Endothelial cell of umbilical vein (primary cell): ENCODE measurements at regions of chr1 and their contacts with region 1.

Region 1: GRCh38 chr1:116570358-116571200 is at the start of gene CD58:
- DNase-seq: peak; percentile 83
- H3K4me3 ChIP-seq: peak within 1 kb of the TSS; percentile 64 to 93 (median 69)
- H3K27ac ChIP-seq: peak within 1 kb of the TSS; percentile 70
- H3K4me1 ChIP-seq: peaks cover 9% of the 10 kb centered on the region
- H3K27me3 ChIP-seq: peaks cover 6% of the 10 kb centered on the region in 2 experiments
- CTCF ChIP-seq: peak; percentile 75
- POLR2A ChIP-seq: peak; percentile 81
- total RNA-seq, gene CD58: 9.8 and 12.3 TPM in 2 replicates

Region 2: DNA sequence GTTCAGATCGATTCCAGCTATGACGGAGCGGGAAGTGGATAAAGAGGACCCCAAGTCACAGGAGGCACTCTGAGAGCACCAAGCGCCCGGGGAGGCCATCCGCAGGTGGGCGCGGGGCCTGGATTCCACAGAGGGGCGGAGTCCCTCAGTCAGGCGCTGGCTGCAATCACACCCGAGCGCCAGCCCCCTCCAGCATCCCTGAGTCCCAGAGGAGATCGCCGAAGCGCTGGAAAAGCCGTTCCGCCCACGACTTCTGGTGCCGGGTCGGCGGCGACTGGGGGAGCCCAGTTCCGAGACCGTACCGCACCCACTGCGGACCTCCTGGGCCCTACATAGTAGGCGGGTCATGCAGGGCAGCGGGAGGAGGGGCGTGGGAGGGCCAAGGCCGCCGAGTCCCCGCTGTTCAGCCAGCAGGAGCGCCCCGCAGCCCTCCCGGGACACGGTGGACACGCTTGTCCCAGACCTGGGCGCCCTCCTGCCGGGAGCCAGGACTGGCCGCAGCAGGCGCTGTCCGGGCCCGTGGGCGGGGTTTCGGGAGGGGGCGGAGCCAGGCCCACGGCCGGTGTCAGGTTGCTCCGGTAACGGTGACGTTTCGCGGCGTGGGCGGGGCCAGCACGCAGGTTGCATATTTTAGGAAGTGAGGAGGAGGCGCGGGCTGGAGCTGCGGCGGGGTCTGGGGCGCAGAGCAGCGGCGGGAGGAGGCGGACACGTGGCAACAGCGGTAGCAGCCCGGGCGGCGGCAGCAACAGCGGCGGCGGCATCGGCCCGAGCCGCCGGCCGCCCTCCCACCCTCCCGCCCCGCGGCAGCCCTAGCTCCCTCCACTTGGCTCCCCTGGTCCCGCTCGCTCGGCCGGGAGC is 197.8 kb before region 1 on chr1 and contains the start of gene ATP1A1:
- CTCF ChIA-PET with region 1: no interaction called
- POLR2A ChIA-PET with region 1: no interaction called
- dilution Hi-C with region 1: no loop called
- intact Hi-C with region 1: loop called (anchors 5 kb)
- DNase-seq: peak; percentile 96
- H3K4me3 ChIP-seq: peak within 1 kb of the TSS; percentile 91 to 96 (median 94)
- H3K27ac ChIP-seq: peak within 1 kb of the TSS; percentile 96
- H3K4me1 ChIP-seq: peaks cover 37% of the 10 kb centered on the region
- H3K27me3 ChIP-seq: peaks cover 10 to 26% of the 10 kb centered on the region in 2 experiments
- CTCF ChIP-seq: peak in 1 of 2 donors; percentile 12
- POLR2A ChIP-seq: peak; percentile 93
- total RNA-seq, gene ATP1A1: 263 and 325 TPM in 2 replicates

Region 3: GRCh38 chr1:116556289-116557006 is 14.1 kb before region 1 on chr1:
- CTCF ChIA-PET with region 1: interaction called, 10 read pairs
- POLR2A ChIA-PET with region 1: no interaction called
- dilution Hi-C with region 1: no loop called
- intact Hi-C with region 1: no loop called
- DNase-seq: no peak
- H3K4me3 ChIP-seq: no peak overlapping the region
- H3K27ac ChIP-seq: no peak overlapping the region
- H3K4me1 ChIP-seq: peaks cover 2% of the 10 kb centered on the region
- H3K27me3 ChIP-seq: no peaks in the 10 kb centered on the region
- CTCF ChIP-seq: no peak
- POLR2A ChIP-seq: no peak

Region 4: DNA sequence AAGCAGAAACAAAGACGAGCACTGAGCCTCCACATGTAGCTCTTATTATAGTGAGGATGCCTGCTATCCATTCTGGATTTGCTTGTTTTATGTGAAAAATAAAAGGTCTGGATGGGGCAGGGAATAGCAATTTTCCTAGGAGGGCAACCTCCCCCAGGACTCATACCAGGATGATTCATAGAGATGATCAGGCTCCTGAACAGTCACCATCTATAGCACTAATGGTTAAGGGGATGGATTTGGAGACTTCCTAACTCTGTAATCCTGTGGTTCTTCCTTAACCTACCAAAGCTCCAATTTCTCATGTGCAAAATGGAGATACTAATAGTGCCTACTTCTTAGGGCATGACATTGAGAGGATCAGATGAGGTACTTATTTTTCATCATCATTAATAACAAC is 34.7 kb after region 1 on chr1:
- CTCF ChIA-PET with region 1: no interaction called
- POLR2A ChIA-PET with region 1: no interaction called
- dilution Hi-C with region 1: no loop called
- intact Hi-C with region 1: no loop called
- DNase-seq: no peak
- H3K4me3 ChIP-seq: no peak overlapping the region
- H3K27ac ChIP-seq: no peak overlapping the region
- H3K4me1 ChIP-seq: no peaks in the 10 kb centered on the region
- H3K27me3 ChIP-seq: no peaks in the 10 kb centered on the region
- CTCF ChIP-seq: no peak
- POLR2A ChIP-seq: no peak

Region 5: GRCh38 chr1:116737020-116737854 is 166.7 kb after region 1 on chr1:
- CTCF ChIA-PET with region 1: interaction called, 6 read pairs
- POLR2A ChIA-PET with region 1: no interaction called
- dilution Hi-C with region 1: no loop called
- intact Hi-C with region 1: loop called (anchors 5 kb)
- DNase-seq: peak; percentile 60
- H3K4me3 ChIP-seq: no peak overlapping the region
- H3K27ac ChIP-seq: no peak overlapping the region
- H3K4me1 ChIP-seq: no peaks in the 10 kb centered on the region
- H3K27me3 ChIP-seq: peaks cover 0 to 2% of the 10 kb centered on the region in 2 experiments
- CTCF ChIP-seq: peak; percentile 77 to 80
- POLR2A ChIP-seq: no peak

Region 6: GRCh38 chr1:116763787-116764465 is 193.3 kb after region 1 on chr1:
- CTCF ChIA-PET with region 1: no interaction called
- POLR2A ChIA-PET with region 1: no interaction called
- dilution Hi-C with region 1: no loop called
- intact Hi-C with region 1: no loop called
- DNase-seq: peak; percentile 5
- H3K4me3 ChIP-seq: no peak overlapping the region
- H3K27ac ChIP-seq: no peak overlapping the region
- H3K4me1 ChIP-seq: no peaks in the 10 kb centered on the region
- H3K27me3 ChIP-seq: no peaks in the 10 kb centered on the region
- CTCF ChIP-seq: peak; percentile 30 to 50
- POLR2A ChIP-seq: no peak

Region 7: DNA sequence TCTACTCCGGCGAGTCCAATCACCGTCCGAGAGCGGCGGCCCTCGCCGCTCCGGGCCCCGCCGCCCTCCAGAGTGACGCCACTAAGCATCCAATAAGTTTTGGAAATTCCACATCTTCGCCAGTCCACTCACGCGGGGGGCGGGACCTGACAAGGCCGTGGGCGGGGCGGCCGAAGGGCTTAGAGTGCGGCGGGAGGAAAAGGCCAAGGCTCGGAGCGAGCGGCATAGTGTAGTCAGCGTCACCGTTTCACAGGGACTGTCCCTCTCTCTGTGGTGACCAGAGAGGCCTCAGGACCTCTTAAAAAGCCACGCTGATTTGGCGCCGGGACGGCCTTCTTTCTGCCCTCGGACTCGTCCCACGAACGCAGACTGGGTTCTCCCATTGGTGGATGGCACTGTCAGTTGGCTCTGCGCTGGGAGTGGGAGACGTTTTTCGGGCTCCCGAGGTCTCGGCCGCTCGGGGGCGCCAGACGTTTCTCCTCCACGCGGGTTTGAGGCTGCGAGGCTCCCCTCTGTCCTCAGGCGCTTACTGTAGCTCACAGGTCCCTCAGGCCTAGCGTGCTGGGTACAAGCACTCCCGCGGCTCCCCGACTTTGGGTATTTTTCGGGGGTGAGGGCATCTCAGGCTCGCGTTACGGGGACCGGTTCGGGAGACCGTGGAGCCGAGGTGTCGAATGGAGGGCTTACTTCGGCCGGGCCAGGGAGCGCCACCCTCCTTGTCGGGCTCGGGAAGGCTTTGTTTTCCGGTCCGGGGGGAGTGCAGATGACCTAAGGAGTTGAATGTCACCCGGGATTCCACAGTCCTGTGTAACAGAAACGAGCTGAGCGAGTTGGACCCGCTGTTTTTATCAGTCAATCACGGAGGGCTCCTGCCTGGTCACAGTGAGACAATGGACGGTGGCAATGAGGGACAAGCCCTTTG is 551.5 kb after region 1 on chr1:
- CTCF ChIA-PET with region 1: no interaction called
- POLR2A ChIA-PET with region 1: no interaction called
- dilution Hi-C with region 1: no loop called
- intact Hi-C with region 1: loop called (anchors 5 kb)
- DNase-seq: peak; percentile 98
- H3K4me3 ChIP-seq: peak overlapping the region; percentile 48 to 86 (median 74)
- H3K27ac ChIP-seq: peak overlapping the region; percentile 90
- H3K4me1 ChIP-seq: peaks cover 10% of the 10 kb centered on the region
- H3K27me3 ChIP-seq: peaks cover 11 to 25% of the 10 kb centered on the region in 2 experiments
- CTCF ChIP-seq: peak; percentile 88 to 91
- POLR2A ChIP-seq: no peak